Dorsolateral prefrontal cortex (tissue), 120 donors: ENCODE measurements at regions of chr20 and their contacts with region 1.

Region 1: DNA sequence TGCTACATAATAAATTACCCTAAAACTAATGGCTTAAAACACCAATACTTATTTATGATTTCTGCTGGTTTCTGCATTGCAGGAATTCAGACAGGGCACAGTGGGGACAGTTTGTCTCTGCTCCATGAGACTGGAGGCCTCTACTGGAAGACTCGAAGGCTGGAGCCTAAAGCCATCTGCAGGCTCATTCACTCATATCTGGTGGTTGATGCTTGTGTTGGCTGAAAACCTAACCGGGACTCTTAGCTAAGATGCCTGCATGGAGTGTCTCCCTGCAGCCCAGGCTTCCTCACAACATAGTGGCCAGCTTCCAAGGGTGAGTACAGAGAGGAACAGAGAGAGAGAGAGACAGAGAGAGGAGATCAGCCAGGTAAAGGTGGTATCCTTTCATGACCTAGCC is 195.5 kb upstream of the FOXA2 start:
- DNase-seq: no peak
- H3K4me3 ChIP-seq: no peak overlapping the region
- H3K27ac ChIP-seq: no peak overlapping the region
- H3K27me3 ChIP-seq: peaks cover 0 to 5% (median 0%) of the 10 kb centered on the region in 45 donors
- CTCF ChIP-seq: no peak

Region 2: DNA sequence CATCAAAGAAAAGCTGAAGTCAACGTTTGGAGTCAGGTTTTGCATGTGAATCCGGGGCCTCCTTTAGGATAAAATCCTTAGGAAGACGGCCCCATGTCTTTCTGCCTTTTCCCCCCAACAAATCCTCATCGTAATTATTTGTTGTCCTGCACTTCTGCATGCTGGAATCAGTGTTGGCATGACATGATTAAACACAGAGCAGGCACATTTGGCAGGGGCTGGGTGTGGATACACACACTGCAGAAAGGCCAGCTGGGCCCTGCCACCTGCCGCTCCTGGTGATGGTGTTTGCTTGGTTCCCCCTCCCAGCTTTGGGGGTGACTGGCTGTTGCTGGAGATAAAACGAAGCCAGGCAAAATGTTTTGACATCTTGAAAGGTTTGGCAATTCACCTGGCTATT is 149.2 kb before region 1 on chr20:
- intact Hi-C with region 1: no loop called
- DNase-seq: peak in 1 of 10 donors; percentile 13
- H3K4me3 ChIP-seq: no peak overlapping the region
- H3K27ac ChIP-seq: no peak overlapping the region
- H3K27me3 ChIP-seq: peaks cover 0 to 13% (median 0%) of the 10 kb centered on the region in 45 donors
- CTCF ChIP-seq: no peak

Region 3: GRCh38 chr20:22821096-22821727 is 41.3 kb after region 1 on chr20:
- intact Hi-C with region 1: loop called in 1 of 2 experiments (anchors 5 kb)
- DNase-seq: no peak
- H3K4me3 ChIP-seq: no peak overlapping the region
- H3K27ac ChIP-seq: no peak overlapping the region
- H3K27me3 ChIP-seq: peaks cover 0 to 6% (median 0%) of the 10 kb centered on the region in 45 donors
- CTCF ChIP-seq: no peak

Region 4: DNA sequence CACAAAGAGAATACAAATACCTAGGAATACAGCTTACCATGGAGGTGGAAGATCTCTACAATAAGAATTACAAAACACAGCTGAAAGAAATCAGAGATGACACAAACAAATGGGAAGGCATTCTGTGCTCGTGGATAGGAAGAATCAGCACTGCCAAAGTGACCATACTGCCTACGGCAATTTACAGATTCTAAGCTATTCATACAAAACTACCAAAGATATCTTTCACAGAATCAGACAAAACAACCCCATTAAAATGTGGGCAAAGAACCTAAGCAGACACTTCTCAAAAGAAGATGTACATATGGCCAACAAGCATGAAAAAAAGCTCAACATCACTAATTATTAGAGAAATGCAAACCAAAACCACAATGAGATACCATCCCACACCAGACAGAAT is 122.0 kb after region 1 on chr20:
- intact Hi-C with region 1: no loop called
- DNase-seq: no peak
- H3K4me3 ChIP-seq: no peak overlapping the region
- H3K27ac ChIP-seq: no peak overlapping the region
- H3K27me3 ChIP-seq: no peaks in the 10 kb centered on the region
- CTCF ChIP-seq: no peak